Spleen (tissue), 13 donors: ENCODE measurements at regions of chr6 and their contacts with region 1.

Region 1: DNA sequence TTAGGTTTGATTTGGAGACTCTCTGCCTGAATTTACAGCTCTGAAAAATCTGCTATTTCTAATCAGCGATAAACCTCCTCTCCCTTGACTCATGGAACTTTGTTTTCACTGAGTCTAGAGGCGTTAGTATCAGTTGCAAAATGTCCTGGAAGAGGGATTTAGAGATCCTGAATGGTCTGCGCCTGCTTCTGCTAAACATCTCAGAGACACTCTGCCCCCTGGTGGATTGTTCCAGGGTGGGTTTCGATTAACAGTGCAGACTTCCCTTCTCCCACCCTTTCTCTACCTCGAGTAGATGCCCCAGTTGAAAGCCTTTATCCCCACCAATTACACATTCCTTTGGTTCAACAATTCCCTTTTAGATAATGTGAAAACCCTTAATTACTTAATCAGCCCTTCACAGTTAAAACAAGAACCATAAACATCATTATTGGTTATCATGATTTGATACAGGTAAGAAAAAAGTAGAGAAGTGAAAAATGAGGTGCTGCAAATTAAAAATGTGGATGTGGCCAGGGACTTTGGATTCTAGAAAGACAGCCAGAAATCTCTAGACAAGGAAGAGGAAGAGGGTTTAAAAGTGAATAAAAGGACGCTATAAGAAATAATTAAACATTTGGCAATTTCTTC is 5.5 kb downstream of the HTR1B start:
- DNase-seq: no peak
- H3K4me3 ChIP-seq: no peak overlapping the region
- H3K27ac ChIP-seq: no peak overlapping the region
- H3K4me1 ChIP-seq: peaks cover 0 to 8% (median 1%) of the 10 kb centered on the region in 6 donors
- H3K27me3 ChIP-seq: peaks cover 4 to 51% (median 16%) of the 10 kb centered on the region in 7 donors
- CTCF ChIP-seq: peak in 9 of 11 experiments; percentile 22 to 71 (median 61)
- POLR2A ChIP-seq: no peak

Region 2: DNA sequence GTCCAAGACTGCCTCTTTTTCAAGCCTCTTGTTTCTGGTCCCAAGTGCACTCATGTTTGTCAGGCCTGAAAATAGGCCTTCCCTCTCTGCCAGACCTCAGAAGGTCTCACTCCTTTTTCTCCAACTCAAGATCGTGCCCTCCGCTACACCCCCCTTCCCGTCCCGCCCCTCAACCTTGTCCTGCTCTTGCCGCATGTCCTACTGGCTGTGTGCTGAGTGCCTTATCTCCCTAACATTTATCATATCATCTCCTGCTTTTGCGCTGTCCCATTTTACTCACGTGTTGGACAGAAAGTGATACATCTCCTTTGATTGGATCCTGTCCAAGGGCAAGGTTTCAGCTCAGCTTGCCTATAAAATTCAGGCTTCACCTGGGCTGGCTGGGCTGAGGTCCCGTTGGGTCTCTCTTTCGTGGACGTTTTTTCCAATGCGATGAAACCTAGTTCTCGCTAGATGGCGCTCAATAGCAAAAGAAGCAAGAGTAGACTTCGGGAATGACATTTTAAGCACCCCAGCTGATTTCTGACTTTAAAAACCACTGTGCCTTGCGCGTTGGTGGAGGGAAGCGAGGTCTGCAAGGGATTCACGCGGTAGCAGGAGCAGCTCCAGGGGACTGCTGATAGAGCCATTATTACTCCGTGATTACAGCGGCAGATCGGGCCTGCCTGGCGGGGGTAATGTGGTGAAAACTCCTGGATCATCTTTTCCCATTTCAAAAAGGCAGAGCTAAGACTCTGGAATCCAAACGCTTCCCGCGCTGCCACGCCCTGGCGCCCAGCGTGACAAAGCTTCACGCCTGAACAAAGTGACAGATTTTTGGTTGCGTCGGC is 1523.0 kb before region 1 on chr6:
- intact Hi-C with region 1: loop called (anchors 5 kb)
- DNase-seq: no peak
- H3K4me3 ChIP-seq: peak overlapping the region in 6 of 8 donors; percentile 5 to 61 (median 20)
- H3K27ac ChIP-seq: no peak overlapping the region
- H3K4me1 ChIP-seq: peaks cover 0 to 13% (median 9%) of the 10 kb centered on the region in 6 donors
- H3K27me3 ChIP-seq: peaks cover 0 to 27% (median 6%) of the 10 kb centered on the region in 7 donors
- CTCF ChIP-seq: peak in 9 of 11 experiments; percentile 17 to 73 (median 54)
- POLR2A ChIP-seq: no peak

Region 3: DNA sequence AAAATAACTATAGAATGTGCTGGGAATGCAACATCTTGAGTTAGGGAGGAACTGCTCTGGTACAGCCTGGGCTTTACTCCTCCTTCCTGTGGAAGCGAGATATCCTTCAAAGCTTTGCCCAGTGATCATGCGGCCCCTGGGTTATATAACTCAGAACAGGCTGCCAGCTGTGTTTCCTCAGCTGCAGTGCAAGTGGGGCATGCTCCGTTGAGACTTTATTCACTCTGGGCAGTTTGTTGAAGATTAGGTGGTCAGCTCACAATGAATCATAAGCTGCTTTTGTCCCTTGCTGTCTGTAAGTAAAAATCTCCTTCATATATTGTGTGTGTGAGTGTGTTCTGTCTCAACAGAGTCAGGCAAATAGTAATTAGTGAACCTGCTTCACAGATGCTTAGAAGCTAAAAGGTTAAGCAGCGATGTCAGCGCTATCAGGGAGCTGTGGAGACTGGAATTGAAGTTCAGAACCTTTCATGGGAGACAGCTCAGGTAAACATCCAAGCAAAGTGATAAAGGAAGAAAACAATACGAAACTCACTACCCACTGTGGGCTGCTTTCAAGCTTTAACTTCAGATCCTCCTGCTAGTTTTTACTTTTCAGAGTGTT is 683.0 kb before region 1 on chr6:
- intact Hi-C with region 1: no loop called
- DNase-seq: no peak
- H3K4me3 ChIP-seq: no peak overlapping the region
- H3K27ac ChIP-seq: no peak overlapping the region
- H3K4me1 ChIP-seq: no peaks in the 10 kb centered on the region
- H3K27me3 ChIP-seq: no peaks in the 10 kb centered on the region
- CTCF ChIP-seq: no peak
- POLR2A ChIP-seq: no peak

Region 4: GRCh38 chr6:77626431-77626830 is 168.6 kb after region 1 on chr6:
- intact Hi-C with region 1: no loop called
- DNase-seq: no peak
- H3K4me3 ChIP-seq: no peak overlapping the region
- H3K27ac ChIP-seq: no peak overlapping the region
- H3K4me1 ChIP-seq: no peaks in the 10 kb centered on the region
- H3K27me3 ChIP-seq: no peaks in the 10 kb centered on the region
- CTCF ChIP-seq: no peak
- POLR2A ChIP-seq: no peak